Posterior vena cava (tissue), 2 donors: ENCODE measurements at regions of chr11 and their contacts with region 1.

Region 1: DNA sequence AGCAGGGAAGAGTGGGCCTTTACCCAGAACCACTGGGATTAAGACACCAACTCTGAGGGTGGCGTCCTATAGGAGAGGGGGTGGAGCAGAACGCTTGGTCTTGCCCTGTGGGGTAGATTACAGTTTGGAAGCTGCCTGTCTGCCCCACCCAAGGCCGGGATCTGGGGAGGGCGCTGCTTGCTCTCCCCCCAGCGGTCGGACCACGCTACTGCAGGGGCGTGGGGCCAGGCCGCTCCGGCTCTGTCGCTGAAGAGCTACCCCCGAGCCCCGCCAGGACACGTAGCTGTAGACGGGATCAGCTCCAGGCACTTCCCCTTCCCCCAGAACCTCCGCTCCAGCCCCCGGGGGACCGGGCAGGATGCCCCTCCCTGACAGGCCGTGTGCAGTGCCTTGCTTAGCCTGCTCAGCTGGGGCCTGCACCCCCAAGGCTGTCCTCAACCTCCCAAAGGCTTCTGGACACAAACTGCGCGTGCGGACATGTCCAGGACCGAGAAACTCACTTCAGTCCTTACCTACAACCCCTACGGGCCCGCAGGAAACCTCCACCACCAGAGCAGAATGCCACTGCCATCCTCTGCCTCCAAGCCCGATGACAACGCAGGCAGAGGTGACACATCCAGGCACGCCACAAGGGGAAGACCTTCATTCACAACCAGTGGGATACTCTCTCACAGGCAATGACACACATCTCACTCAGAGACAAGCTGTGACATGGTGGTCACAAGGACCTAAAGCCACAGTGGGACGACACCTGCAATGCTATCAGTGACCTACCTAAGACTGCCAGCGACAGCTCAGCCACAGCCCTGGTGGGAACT is 3.6 kb downstream of the AHNAK start:
- DNase-seq: peak; percentile 95

Region 2: DNA sequence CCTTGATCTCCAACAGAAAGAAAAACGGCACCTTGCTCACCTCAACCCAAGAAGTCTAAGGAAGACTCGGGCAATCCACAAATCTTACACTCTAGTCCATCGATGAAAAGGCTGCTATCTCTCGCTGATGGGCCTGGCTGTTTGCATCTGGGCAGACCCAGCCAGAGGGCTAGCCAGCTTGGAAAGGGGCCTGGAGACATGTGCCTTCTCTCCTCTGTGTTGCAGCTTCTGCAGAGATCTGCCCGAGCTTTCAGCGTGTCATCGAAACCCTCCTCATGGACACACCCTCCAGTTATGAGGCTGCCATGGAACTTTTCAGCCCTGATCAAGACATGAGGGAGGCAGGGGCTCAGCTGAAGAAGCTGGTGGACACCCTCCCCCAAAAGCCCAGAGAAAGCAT is 121.0 kb before region 1 on chr11:
- intact Hi-C with region 1: loop called (anchors 5 kb)
- DNase-seq: no peak

Region 3: GRCh38 chr11:62427630-62428233 is 115.2 kb before region 1 on chr11:
- intact Hi-C with region 1: loop called (anchors 5 kb)
- DNase-seq: no peak

Region 4: GRCh38 chr11:62444236-62444833 is 98.6 kb before region 1 on chr11:
- intact Hi-C with region 1: loop called in 1 of 2 experiments (anchors 5 kb)
- DNase-seq: peak; percentile 92

Region 5: GRCh38 chr11:62508268-62509058 is 34.5 kb before region 1 on chr11:
- intact Hi-C with region 1: no loop called
- DNase-seq: peak; percentile 86

Region 6: DNA sequence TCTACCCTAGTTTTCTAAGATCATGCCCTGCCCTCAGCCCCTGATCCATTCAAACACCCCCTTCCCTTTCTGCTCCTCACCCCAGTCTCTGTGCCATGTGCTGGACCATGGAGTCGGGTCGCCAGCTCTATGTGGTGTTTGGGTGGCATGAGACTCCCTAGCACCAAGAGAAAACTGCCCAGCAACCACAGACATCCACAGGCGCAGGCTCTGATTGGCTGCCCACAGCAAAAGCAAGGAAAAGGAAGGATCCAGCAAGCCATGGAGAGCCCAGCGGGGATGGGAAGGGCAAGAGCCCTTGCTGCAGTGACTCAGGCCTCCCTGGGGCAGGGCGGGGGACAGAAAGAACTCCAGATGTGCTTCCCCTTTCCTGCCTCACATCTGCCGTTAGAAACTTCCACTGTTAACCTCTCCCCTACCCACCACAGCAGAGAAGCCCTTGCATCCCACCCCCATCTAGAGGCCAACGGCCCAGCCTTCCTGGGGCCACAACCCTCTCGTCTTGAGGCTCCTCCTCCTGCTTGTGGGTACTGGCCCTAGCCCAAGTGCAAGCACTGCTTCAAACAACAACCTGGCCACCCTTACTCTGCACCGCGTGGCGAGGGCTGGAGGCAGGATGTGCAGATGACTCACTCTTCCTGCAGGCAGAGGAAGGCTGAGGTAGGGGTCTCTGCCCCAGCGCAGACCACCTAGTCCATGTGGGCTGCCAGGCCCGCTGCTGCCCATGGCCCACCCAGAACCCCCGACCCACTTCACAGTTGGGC is 13.3 kb after region 1 on chr11:
- intact Hi-C with region 1: no loop called
- DNase-seq: peak; percentile 97